ENCODE measurements at regions of chr17 and their contacts with region 1.

Region 1: GRCh38 chr17:5486204-5487124 is at the start of gene MIS12:
- DNase-seq: peak; percentile 98 to 99 (median 99)
- H3K4me3 ChIP-seq: peak within 1 kb of the TSS; percentile 90 to 98 (median 91)
- H3K4me3 Mint-ChIP-seq: peak within 1 kb of the TSS; percentile 93 to 97
- H3K27ac ChIP-seq: peak within 1 kb of the TSS; percentile 91 to 96
- H3K27ac Mint-ChIP-seq: peak within 1 kb of the TSS; percentile 97 to 99 (median 98)
- H3K4me1 ChIP-seq: peaks cover 15 to 22% of the 10 kb centered on the region in 2 donors
- H3K4me1 Mint-ChIP-seq: peaks cover 19% of the 10 kb centered on the region
- H3K27me3 ChIP-seq: no peaks in the 10 kb centered on the region
- H3K27me3 Mint-ChIP-seq: peaks cover 0 to 1% (median 0%) of the 10 kb centered on the region in 3 donors
- CTCF ChIP-seq: no peak
- polyA plus RNA-seq, gene MIS12: 6.9 to 10.8 (median 8.9) TPM

Region 2: DNA sequence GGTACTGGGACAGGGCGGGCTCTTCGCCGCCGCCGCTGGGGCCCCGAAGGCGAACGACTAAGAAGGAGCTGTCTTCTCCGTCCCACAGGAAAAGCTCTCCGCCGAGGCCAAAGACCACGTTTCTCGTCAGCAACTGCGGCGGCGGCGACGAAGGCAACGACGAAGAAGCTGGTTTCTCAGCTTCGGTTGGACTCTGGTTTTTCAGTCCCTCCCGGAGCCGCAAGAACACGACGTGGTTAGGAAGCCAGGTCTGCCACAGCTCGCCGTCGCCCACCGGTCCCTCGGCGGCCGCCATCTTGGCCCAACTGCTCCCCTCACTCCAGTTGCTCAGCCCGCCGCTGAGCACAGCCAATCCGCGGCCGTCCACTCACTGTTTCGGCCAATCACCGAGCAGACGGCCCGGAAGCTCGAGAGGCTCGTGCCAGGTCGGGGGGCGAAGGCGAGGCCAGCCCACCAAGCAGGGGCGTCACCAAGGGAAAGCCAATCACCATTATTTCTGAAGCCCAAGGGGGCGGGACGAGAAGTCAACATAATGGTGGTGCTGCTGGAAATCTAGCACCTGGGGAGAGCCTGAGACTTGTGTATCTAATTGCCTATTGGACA is 67.0 kb before region 1 on chr17 and contains the start of gene NUP88:
- intact Hi-C with region 1: loop called in 1 of 2 experiments (anchors 5 kb)
- DNase-seq: peak; percentile 81 to 94 (median 93)
- H3K4me3 ChIP-seq: peak within 1 kb of the TSS; percentile 60 to 90 (median 87)
- H3K4me3 Mint-ChIP-seq: peak within 1 kb of the TSS; percentile 98 to 99
- H3K27ac ChIP-seq: peak within 1 kb of the TSS; percentile 85 to 89
- H3K27ac Mint-ChIP-seq: peak within 1 kb of the TSS; percentile 88 to 97 (median 95)
- H3K4me1 ChIP-seq: peaks cover 15 to 20% of the 10 kb centered on the region in 2 donors
- H3K4me1 Mint-ChIP-seq: peaks cover 23% of the 10 kb centered on the region
- H3K27me3 ChIP-seq: no peaks in the 10 kb centered on the region
- H3K27me3 Mint-ChIP-seq: peaks cover 0 to 2% (median 2%) of the 10 kb centered on the region in 3 donors
- CTCF ChIP-seq: no peak
- polyA plus RNA-seq, gene NUP88: 23.1 to 45.7 (median 36.1) TPM

Region 3: GRCh38 chr17:5438716-5439445 is 47.6 kb before region 1 on chr17 and contains the start of gene C1QBP:
- intact Hi-C with region 1: loop called (anchors 2 to 10 kb)
- DNase-seq: peak; percentile 92 to 95 (median 93)
- H3K4me3 ChIP-seq: peak within 1 kb of the TSS; percentile 60 to 94 (median 70)
- H3K4me3 Mint-ChIP-seq: peak within 1 kb of the TSS; percentile 74 to 84
- H3K27ac ChIP-seq: peak within 1 kb of the TSS; percentile 59 to 79
- H3K27ac Mint-ChIP-seq: peak within 1 kb of the TSS; percentile 62 to 92 (median 85)
- H3K4me1 ChIP-seq: peaks cover 18 to 22% of the 10 kb centered on the region in 2 donors
- H3K4me1 Mint-ChIP-seq: peaks cover 27% of the 10 kb centered on the region
- H3K27me3 ChIP-seq: no peaks in the 10 kb centered on the region
- H3K27me3 Mint-ChIP-seq: peaks cover 0 to 1% (median 0%) of the 10 kb centered on the region in 3 donors
- CTCF ChIP-seq: peak; percentile 99
- polyA plus RNA-seq, gene C1QBP: 32.7 to 169 (median 122) TPM

Region 4: DNA sequence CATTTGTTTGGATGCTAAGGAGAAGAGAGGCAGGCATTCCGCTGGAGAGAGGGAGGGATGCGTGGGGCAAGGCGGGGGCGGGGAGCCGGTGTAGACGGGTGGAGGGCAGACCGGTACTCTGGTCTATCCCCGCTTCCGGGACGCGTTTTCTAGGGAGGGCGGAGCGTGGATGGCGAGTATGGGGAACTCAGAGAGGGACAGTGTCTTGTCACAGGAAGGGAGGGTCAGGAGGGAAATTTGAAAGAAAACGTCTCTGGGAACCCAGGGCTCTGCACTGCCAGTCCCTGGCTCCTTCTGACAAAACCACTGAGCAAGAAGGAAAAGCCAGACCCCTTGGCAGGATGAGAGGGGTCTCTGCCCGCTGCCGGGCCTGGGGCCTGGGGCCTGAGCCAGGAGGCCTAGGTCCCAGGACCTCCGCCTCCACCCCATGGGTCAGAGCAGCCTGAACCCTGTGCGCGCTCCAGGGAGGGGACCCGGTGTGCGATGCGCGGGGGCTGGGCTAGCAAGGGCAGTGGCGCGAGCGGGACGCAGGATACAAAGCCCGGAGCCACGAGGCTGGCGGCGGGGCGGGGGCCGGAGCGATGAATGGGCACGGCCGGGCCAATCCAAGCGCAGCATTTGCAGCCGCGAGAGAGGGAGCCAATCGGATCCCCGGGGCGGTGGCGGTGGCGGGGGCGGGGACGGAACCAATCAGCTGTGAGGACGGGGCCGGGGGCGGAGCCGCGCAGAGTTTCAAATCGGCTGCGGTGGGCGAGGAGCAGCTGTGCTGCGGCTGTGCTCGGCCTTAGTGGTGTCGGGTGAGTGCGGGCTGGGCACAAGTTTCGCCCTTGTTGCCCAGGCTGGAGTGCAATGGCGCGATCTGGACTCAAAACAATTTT is 957.5 kb after region 1 on chr17 and contains the start of gene PIMREG:
- intact Hi-C with region 1: loop called in 1 of 2 experiments (anchors 10 kb)
- DNase-seq: peak; percentile 84 to 86 (median 86)
- H3K4me3 ChIP-seq: peak within 1 kb of the TSS; percentile 54 to 91 (median 75)
- H3K4me3 Mint-ChIP-seq: peak within 1 kb of the TSS; percentile 97 to 99
- H3K27ac ChIP-seq: peak within 1 kb of the TSS; percentile 64 to 77
- H3K27ac Mint-ChIP-seq: peak within 1 kb of the TSS; percentile 92 to 97 (median 95)
- H3K4me1 ChIP-seq: peaks cover 20 to 25% of the 10 kb centered on the region in 2 donors
- H3K4me1 Mint-ChIP-seq: peaks cover 24% of the 10 kb centered on the region
- H3K27me3 ChIP-seq: no peaks in the 10 kb centered on the region
- H3K27me3 Mint-ChIP-seq: peaks cover 6 to 13% (median 11%) of the 10 kb centered on the region in 3 donors
- CTCF ChIP-seq: no peak
- polyA plus RNA-seq, gene PIMREG: not detected

Measured in CD14-positive monocyte (primary cell).